GM10248 (cell line): ENCODE measurements at regions of chr18 and their contacts with region 1.

Region 1: GRCh38 chr18:35060122-35060815 is 19.1 kb downstream of the MAPRE2 start:
- DNase-seq: no peak
- CTCF ChIP-seq: no peak

Region 2: GRCh38 chr18:35040988-35041814 is 19.1 kb before region 1 on chr18 and contains the start of gene MAPRE2:
- CTCF ChIA-PET with region 1: interaction called, 11 read pairs
- POLR2A ChIA-PET with region 1: no interaction called
- DNase-seq: peak; percentile 98
- CTCF ChIP-seq: no peak